WTC11 (cell line): ENCODE measurements at regions of chr7 and their contacts with region 1.

Region 1: DNA sequence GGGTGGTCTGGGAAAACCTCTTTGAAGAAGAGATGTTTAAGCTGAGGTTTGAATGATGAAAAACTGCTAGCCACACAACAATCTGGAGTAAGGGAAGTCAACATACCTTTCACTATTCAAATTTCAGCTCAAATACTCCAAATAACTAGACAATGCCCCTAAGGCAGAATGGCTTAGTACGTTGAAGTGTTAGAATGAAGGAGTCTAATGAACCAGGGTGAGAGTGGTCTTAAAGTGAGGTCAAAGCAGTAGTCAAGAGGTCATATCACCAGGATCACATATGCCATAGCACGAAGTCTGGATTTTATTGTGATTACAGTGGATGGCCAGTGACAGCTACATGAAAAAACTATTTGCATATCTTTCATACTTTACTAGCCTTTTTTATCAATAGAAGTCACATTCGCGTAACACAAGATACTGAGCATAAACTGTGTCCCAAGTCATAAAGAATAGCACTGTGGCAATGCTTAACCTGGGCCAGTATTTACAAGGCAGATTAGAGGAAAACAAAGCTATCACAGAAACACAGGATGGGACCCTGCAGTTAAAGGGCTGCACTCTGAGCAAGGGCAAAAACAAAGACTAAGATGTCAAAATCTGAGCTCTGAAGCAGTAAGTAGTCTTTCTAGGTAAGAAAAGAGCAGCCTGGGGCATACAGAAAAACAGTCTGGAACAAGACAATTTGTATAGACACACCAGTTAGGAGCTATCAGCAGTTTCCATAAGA is 61.5 kb downstream of the HYCC1 start:
- DNase-seq: no peak
- ATAC-seq: peak; percentile 87
- H3K4me3 Mint-ChIP-seq: no peak overlapping the region
- H3K27ac Mint-ChIP-seq: peak overlapping the region; percentile 45
- H3K4me1 Mint-ChIP-seq: peaks cover 45% of the 10 kb centered on the region
- H3K27me3 Mint-ChIP-seq: no peaks in the 10 kb centered on the region
- CTCF ChIP-seq: no peak

Region 2: GRCh38 chr7:22712999-22713398 is 239.5 kb before region 1 on chr7:
- CTCF ChIA-PET with region 1: no interaction called
- POLR2A ChIA-PET with region 1: no interaction called
- DNase-seq: no peak
- ATAC-seq: no peak
- H3K4me3 Mint-ChIP-seq: no peak overlapping the region
- H3K27ac Mint-ChIP-seq: no peak overlapping the region
- H3K4me1 Mint-ChIP-seq: peaks cover 15% of the 10 kb centered on the region
- H3K27me3 Mint-ChIP-seq: no peaks in the 10 kb centered on the region; the same call in 1 of the 2 replicates
- CTCF ChIP-seq: no peak

Region 3: GRCh38 chr7:23055582-23056178 is 103.2 kb after region 1 on chr7:
- CTCF ChIA-PET with region 1: interaction called, 14 read pairs
- POLR2A ChIA-PET with region 1: no interaction called
- DNase-seq: peak; percentile 50
- ATAC-seq: peak; percentile 82
- H3K4me3 Mint-ChIP-seq: no peak overlapping the region
- H3K27ac Mint-ChIP-seq: no peak overlapping the region
- H3K4me1 Mint-ChIP-seq: peaks cover 24% of the 10 kb centered on the region
- H3K27me3 Mint-ChIP-seq: no peaks in the 10 kb centered on the region
- CTCF ChIP-seq: peak; percentile 64

Region 4: GRCh38 chr7:23093546-23093945 is 141.1 kb after region 1 on chr7:
- CTCF ChIA-PET with region 1: no interaction called
- POLR2A ChIA-PET with region 1: no interaction called
- DNase-seq: no peak
- ATAC-seq: no peak
- H3K4me3 Mint-ChIP-seq: no peak overlapping the region
- H3K27ac Mint-ChIP-seq: no peak overlapping the region
- H3K4me1 Mint-ChIP-seq: no peaks in the 10 kb centered on the region
- H3K27me3 Mint-ChIP-seq: no peaks in the 10 kb centered on the region; the same call in 1 of the 2 replicates
- CTCF ChIP-seq: no peak